Astrocyte of the cerebellum (primary cell): ENCODE measurements at regions of chr2 and their contacts with region 1.

Region 1: DNA sequence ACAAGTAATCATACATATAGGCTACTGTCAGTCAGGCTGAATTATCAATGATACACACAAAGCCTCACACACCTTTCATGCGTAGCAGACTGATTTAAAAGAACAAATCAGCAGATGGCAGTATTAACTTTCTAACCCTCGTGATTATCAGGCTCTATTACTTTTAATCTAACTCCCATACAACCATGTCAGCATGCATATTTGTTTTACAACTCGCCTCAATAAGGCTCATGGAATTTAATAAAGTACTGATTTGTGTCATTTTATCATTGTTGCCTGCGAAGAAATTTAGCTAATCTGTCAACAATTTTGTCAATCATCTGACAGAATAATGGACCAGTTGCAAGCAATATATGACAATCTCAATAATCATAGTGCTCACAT is 82.8 kb downstream of the SLC25A12 start:
- DNase-seq: peak; percentile 23
- H3K4me3 ChIP-seq: no peak overlapping the region
- CTCF ChIP-seq: peak; percentile 34

Region 2: GRCh38 chr2:172052000-172052983 is 241.1 kb after region 1 on chr2:
- in situ Hi-C with region 1: loop called (anchors 25 kb)
- DNase-seq: peak; percentile 9
- H3K4me3 ChIP-seq: no peak overlapping the region
- CTCF ChIP-seq: no peak